ENCODE measurements at regions of chr22 and their contacts with region 1.

Region 1: GRCh38 chr22:41596776-41597634 is 7.4 kb upstream of the PMM1 start:
- H3K4me3 ChIP-seq: no peak overlapping the region
- H3K27ac ChIP-seq: peak overlapping the region; percentile 37; the same call in 1 of the 2 replicates
- H3K4me1 ChIP-seq: no peaks in the 10 kb centered on the region; the same call in 1 of the 2 replicates
- CTCF ChIP-seq: peak; percentile 90

Region 2: DNA sequence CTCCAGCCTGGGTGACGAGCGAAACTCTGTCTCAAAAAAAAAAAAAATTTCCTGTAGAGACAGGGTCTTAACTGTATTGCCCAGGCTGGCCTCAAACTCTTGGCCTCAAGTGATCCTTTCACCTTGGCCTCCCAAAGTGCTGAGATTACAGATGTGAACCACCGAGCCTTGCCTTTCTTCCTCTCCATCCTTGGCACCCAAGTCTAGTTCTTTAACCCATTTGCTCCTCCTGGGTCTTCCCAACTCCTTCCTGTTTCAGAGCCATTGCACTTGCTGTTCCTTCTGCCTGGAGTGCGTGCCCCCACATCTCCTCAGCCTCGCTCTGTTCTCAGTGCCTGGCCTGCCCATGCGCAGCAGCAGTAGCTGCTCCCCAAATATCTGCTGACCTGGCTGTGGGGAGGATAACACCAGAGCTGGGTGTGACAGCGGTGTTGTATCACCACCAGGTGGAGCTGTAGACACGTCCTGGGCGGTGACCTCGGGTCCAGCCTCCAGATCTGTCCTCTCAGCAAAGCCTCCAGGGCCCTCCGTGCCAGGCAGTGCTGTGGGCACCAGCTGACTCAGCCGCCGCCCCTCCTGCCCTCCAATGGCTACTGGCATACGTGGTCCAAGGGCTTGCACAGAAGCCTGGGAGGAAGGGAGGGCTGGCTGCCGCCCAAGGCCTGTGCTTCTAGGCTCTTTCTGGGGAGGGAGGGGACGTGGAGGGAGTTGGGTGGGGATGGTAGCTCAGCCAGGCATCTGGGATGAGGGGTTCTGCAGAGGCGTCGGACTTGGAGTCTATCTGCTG is 193.3 kb before region 1 on chr22:
- CTCF ChIA-PET with region 1: interaction called, 12 read pairs
- POLR2A ChIA-PET with region 1: interaction called, 3 read pairs
- H3K4me3 ChIP-seq: no peak overlapping the region
- H3K27ac ChIP-seq: no peak overlapping the region
- H3K4me1 ChIP-seq: no peaks in the 10 kb centered on the region
- CTCF ChIP-seq: peak; percentile 98

Region 3: GRCh38 chr22:41532908-41533825 is 63.8 kb before region 1 on chr22:
- CTCF ChIA-PET with region 1: interaction called, 12 read pairs
- POLR2A ChIA-PET with region 1: no interaction called
- H3K4me3 ChIP-seq: no peak overlapping the region
- H3K27ac ChIP-seq: no peak overlapping the region
- H3K4me1 ChIP-seq: no peaks in the 10 kb centered on the region
- CTCF ChIP-seq: peak; percentile 72

Region 4: GRCh38 chr22:41551877-41552582 is 45.0 kb before region 1 on chr22:
- CTCF ChIA-PET with region 1: interaction called, 28 read pairs
- POLR2A ChIA-PET with region 1: interaction called, 4 read pairs
- H3K4me3 ChIP-seq: no peak overlapping the region
- H3K27ac ChIP-seq: no peak overlapping the region
- H3K4me1 ChIP-seq: no peaks in the 10 kb centered on the region
- CTCF ChIP-seq: no peak

Region 5: GRCh38 chr22:41576877-41577276 is 20.1 kb before region 1 on chr22:
- CTCF ChIA-PET with region 1: interaction called, 36 read pairs
- POLR2A ChIA-PET with region 1: no interaction called
- H3K4me3 ChIP-seq: no peak overlapping the region
- H3K27ac ChIP-seq: no peak overlapping the region
- H3K4me1 ChIP-seq: no peaks in the 10 kb centered on the region
- CTCF ChIP-seq: peak; percentile 89